Vagina (tissue), 2 donors: ENCODE measurements at regions of chr1 and their contacts with region 1.

Region 1: GRCh38 chr1:110425612-110426152 is 18.2 kb upstream of the LAMTOR5 start:
- DNase-seq: no peak
- H3K4me3 ChIP-seq: no peak overlapping the region
- H3K27ac ChIP-seq: no peak overlapping the region
- H3K4me1 ChIP-seq: peaks cover 5% of the 10 kb centered on the region
- H3K27me3 ChIP-seq: no peaks in the 10 kb centered on the region
- CTCF ChIP-seq: no peak
- POLR2A ChIP-seq: no peak

Region 2: GRCh38 chr1:110390692-110391245 is 34.9 kb before region 1 on chr1 and contains the start of gene SLC16A4:
- intact Hi-C with region 1: loop called (anchors 2 kb)
- DNase-seq: no peak
- H3K4me3 ChIP-seq: peak within 1 kb of the TSS; percentile 24 to 33
- H3K27ac ChIP-seq: peak within 1 kb of the TSS; percentile 63
- H3K4me1 ChIP-seq: peaks cover 5% of the 10 kb centered on the region
- H3K27me3 ChIP-seq: no peaks in the 10 kb centered on the region
- CTCF ChIP-seq: no peak
- POLR2A ChIP-seq: no peak
- total RNA-seq, gene SLC16A4: 6.4 TPM